HEK293 (cell line): ENCODE measurements at regions of chr19 and their contacts with region 1.

Region 1: DNA sequence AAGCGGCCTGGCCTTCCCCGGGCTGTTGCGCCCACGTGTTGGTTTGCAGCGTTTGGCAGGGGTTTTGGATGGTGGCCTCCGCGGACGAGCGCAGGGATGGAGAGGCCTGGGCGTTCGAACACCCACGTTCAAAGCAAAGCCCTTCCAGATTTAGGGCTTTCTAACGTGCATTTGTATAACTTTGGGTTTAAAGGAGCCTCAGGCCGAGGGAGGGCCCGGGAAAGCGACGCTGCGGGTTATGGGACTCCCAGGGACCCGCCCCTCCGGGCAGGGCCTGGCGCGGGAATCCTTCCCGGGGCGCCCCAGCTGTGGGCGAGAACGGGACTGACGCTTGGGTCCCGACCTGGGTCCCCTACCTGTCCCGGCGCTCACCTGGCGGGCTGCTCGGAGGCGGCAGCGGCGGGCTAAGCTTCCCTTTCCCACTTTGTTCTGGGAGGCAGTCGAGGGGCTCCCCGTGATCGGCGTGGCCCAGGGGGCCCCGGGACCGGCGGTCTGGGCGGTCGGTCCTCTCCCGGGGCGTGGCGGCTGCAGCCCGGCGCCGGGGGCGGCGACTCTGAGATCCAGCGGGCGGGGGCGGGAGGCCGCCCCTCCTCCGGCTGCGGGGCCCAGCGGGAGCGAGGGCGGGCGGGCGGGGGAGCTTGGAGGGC is at the start of gene FBXO17:
- H3K4me3 ChIP-seq: peak within 1 kb of the TSS; percentile 65
- H3K27ac ChIP-seq: peak within 1 kb of the TSS; percentile 96
- H3K4me1 ChIP-seq: peaks cover 32% of the 10 kb centered on the region
- CTCF ChIP-seq: no peak

Region 2: GRCh38 chr19:38917516-38918491 is 57.5 kb before region 1 on chr19:
- CTCF ChIA-PET with region 1: no interaction called
- POLR2A ChIA-PET with region 1: no interaction called
- H3K4me3 ChIP-seq: no peak overlapping the region
- H3K27ac ChIP-seq: peak overlapping the region; percentile 17; the same call in 1 of the 2 replicates
- H3K4me1 ChIP-seq: no peaks in the 10 kb centered on the region
- CTCF ChIP-seq: peak; percentile 62

Region 3: GRCh38 chr19:38964738-38965137 is 10.6 kb before region 1 on chr19:
- CTCF ChIA-PET with region 1: interaction called, 62 read pairs
- POLR2A ChIA-PET with region 1: interaction called, 9 read pairs
- H3K4me3 ChIP-seq: no peak overlapping the region
- H3K27ac ChIP-seq: no peak overlapping the region
- H3K4me1 ChIP-seq: peaks cover 8% of the 10 kb centered on the region
- CTCF ChIP-seq: no peak

Region 4: DNA sequence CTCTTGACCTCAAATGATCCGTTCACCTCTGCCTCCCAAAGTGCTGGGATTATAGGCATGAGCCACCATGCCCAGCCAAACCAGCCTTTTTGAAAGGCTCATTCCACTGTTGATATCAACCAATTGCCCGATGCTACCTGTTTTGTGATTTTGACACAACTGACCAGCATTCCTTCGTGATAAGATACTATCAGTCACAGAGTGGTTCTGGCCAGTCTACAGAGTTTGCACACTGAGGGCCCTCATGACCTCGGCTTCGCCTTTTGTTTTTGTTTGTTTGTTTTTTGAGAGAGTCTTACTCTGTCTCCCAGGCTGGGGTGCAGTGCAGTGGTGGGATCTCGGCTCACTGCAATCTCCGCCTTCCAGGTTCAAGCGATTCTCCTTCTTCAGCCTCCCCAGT is 19.3 kb after region 1 on chr19:
- CTCF ChIA-PET with region 1: interaction called, 39 read pairs
- POLR2A ChIA-PET with region 1: interaction called, 7 read pairs
- H3K4me3 ChIP-seq: no peak overlapping the region
- H3K27ac ChIP-seq: no peak overlapping the region
- H3K4me1 ChIP-seq: peaks cover 23% of the 10 kb centered on the region
- CTCF ChIP-seq: no peak

Region 5: GRCh38 chr19:39031368-39032062 is 56.2 kb after region 1 on chr19:
- CTCF ChIA-PET with region 1: interaction called, 18 read pairs
- POLR2A ChIA-PET with region 1: interaction called, 24 read pairs
- H3K4me3 ChIP-seq: peak overlapping the region; percentile 58
- H3K27ac ChIP-seq: peak overlapping the region; percentile 93
- H3K4me1 ChIP-seq: peaks cover 26% of the 10 kb centered on the region
- CTCF ChIP-seq: peak; percentile 78; the same call in 1 of the 2 replicates

Region 6: DNA sequence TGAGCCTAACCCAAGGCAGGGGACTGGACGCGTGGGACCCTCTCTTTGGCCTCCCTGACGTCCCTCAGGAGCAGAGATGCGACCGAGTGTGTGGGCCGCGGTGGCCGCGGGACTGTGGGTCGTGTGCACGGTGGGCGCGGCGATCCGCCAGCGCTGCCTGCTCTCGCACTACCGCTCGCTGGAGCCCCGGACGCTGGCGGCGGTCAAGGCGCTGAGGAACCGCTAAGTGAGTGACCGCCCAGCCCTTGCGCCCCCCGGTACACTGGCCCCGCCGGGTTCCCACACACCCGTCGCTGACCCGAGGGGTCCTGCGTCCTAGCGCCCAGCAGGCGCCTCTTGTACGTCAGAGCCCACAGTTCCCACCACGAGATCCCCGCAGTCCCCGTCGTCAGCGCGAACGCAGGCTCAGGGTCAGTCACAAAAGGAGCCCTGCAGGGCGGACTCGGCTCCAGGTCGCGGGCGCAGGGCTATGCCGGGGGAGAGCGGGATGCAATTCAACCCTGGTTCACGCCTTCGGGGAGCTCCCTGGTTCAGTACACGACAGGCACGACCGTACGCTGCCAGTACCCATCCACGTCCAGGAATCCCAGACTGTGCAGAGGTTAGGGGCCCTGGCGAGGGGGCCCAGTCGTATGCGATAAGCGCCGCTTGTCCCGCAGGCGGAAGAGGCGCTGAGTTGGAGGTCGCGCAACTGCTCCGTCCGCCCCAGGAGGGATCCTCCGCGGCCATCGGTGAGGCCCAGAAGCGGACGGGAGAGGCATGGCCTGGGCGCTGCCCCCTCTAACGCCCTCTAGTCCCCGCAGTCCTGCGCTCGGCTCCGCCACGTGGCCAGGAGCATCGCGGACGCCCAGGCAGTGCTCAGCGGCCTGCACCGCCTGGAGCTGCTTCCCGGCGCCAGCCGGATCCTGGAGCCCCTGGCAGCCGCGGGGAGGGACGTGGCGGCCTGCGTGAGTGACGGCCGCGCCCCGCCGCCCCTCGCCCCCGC is 289.3 kb after region 1 on chr19:
- CTCF ChIA-PET with region 1: no interaction called
- POLR2A ChIA-PET with region 1: no interaction called
- H3K4me3 ChIP-seq: no peak overlapping the region
- H3K27ac ChIP-seq: no peak overlapping the region
- H3K4me1 ChIP-seq: no peaks in the 10 kb centered on the region
- CTCF ChIP-seq: 0 out of 2 replicates have a peak, but pooled peaks have one; percentile 1